Dendritic cell treated with granulocyte-macrophage colony-stimulating factor and Interleukin-4, amounts not matched to agents 40 ng/mL and 50 ng/mL, for 4 days (primary cell): ENCODE measurements at regions of chr9 and their contacts with region 1.

Region 1: DNA sequence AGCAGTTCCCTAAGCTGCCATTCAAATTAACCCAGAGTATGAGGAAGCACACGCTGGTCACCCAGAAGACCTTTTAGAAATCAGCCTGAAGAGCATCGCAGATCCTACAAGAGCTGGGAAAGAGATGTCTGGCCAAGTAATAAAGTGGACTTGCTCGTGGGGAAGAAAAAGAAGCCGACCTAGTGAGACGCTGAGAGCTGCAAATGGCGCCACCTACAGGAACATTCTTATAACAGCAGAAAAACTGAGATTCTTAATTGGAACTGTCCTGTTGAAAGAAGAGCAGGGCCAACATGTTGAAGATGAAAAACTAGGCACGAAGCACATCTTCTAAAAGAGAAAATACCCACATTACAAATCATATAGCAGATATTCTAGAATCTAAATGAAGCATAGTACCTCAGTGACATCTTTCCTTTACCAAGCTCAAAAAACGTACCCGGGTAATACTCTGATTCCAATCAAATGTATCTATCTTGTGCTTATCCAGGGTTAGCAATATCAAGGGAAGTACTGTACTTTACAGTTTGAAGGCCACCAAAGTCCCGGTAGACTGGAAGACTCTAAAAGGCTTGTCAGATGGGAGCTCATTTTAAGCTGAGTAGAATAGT is 3.9 kb upstream of the GNAQ start:
- H3K4me3 Mint-ChIP-seq: no peak overlapping the region
- H3K27ac Mint-ChIP-seq: peak overlapping the region; percentile 61
- H3K4me1 Mint-ChIP-seq: peaks cover 48% of the 10 kb centered on the region
- H3K27me3 Mint-ChIP-seq: no peaks in the 10 kb centered on the region

Region 2: DNA sequence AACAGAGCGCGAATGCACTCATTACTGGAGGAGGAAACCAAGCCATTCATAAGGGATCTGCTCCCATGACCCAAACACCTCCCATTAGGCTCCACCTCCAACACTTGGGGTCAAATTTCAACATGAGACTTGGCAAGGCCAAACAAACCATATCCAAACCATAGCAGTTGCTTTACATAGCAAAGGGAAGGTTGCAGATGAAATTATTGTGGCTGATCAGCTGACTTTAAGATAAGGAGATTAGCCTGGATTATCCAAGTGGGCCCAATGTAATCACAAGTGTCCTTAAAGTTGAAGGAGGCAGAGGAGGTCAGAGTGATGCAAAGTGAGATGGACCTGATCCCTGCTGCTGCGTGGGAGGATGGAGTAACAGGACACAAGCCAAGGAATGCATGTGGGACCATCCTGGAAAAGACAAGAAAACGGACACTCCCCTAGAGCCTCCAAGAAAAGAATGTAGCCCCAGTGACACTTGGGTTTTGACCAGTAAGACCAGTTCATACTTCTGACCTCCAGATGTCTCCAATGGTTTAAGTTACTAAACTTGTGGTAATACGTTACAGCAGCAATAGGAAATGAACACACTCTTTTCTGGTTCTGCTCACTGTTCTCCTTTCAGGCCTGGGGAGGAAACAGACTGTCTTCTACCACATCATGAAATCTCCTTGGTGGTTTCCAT is 171.1 kb before region 1 on chr9:
- intact Hi-C with region 1: loop called (anchors 5 kb)
- H3K4me3 Mint-ChIP-seq: no peak overlapping the region
- H3K27ac Mint-ChIP-seq: peak overlapping the region; percentile 47
- H3K4me1 Mint-ChIP-seq: peaks cover 36% of the 10 kb centered on the region
- H3K27me3 Mint-ChIP-seq: no peaks in the 10 kb centered on the region

Region 3: GRCh38 chr9:77944556-77945243 is 90.8 kb before region 1 on chr9:
- intact Hi-C with region 1: loop called (anchors 5 kb)
- H3K4me3 Mint-ChIP-seq: peak overlapping the region; percentile 77
- H3K27ac Mint-ChIP-seq: peak overlapping the region; percentile 94
- H3K4me1 Mint-ChIP-seq: peaks cover 78% of the 10 kb centered on the region
- H3K27me3 Mint-ChIP-seq: no peaks in the 10 kb centered on the region

Region 4: DNA sequence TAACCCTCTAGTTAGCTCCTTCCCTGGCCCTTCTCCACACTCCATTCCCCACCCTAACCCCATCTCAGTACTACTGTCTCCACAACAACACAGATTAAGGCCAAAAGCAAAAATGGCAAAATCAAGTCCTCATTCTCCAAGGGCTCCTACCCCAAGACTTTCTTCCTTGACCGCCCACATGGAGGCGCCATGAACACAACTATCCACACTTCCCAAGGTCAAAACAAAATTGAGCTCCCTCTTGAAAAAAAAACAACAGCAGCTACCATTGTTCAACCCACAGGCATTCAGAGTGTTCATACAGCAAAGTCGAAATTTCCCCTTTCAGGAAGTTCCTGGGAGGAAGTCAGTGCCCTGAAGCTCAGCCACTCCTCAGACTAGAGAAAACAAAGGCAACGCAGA is 58.3 kb before region 1 on chr9:
- intact Hi-C with region 1: loop called (anchors 2 kb)
- H3K4me3 Mint-ChIP-seq: no peak overlapping the region
- H3K27ac Mint-ChIP-seq: peak overlapping the region; percentile 80
- H3K4me1 Mint-ChIP-seq: peaks cover 65% of the 10 kb centered on the region
- H3K27me3 Mint-ChIP-seq: no peaks in the 10 kb centered on the region

Region 5: DNA sequence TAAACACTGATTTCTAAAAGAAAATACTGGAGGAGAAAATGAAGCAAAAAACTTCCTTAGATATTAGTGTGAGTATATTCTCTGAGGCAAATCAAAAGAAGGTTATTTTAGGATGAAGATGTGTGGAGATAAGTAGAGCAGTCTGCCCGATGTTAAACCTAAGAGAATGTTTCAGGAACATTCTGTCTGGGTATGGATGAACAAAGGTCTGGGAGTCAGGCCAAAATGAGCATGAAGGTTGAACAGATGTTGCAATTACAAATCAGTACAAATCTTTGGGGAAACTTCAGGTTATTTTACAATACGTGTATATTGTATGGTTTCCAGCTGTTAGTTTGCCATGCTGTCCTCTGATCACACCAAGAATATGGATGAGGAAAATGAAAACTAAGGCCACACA is 185.9 kb after region 1 on chr9:
- intact Hi-C with region 1: no loop called
- H3K4me3 Mint-ChIP-seq: no peak overlapping the region
- H3K27ac Mint-ChIP-seq: no peak overlapping the region
- H3K4me1 Mint-ChIP-seq: no peaks in the 10 kb centered on the region
- H3K27me3 Mint-ChIP-seq: peaks cover 2% of the 10 kb centered on the region